Activated CD8-positive, alpha-beta T cell treated with anti-CD3 and anti-CD28 coated beads, Interleukin-2, amount 10 ng/mL, durations not matched to agents 7 days and 5 days (primary cell): ENCODE measurements at regions of chr11 and their contacts with region 1.

Region 1: DNA sequence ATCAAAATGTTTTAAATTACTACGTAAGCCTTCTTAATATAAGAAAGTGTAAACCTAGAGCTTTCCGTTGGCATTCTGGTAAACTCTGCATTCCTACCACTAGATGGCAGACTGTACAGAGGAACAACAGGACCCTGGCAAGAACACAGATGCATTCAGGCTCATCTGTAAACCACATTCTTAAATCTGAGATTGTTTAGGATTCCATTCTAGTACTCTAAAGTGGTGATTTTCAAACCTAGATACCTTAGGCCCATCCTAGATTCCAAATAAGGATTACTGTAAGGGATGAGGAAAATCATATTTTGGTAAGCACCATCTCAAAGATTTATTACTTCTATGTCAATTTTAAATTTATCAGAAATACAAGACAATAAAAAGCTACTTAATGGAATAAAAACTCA is 26.9 kb downstream of the PICALM start:
- DNase-seq: peak; percentile 68
- ATAC-seq: peak; percentile 84
- H3K4me3 Mint-ChIP-seq: no peak overlapping the region
- H3K27ac Mint-ChIP-seq: no peak overlapping the region
- H3K4me1 Mint-ChIP-seq: peaks cover 52% of the 10 kb centered on the region
- H3K27me3 Mint-ChIP-seq: no peaks in the 10 kb centered on the region

Region 2: DNA sequence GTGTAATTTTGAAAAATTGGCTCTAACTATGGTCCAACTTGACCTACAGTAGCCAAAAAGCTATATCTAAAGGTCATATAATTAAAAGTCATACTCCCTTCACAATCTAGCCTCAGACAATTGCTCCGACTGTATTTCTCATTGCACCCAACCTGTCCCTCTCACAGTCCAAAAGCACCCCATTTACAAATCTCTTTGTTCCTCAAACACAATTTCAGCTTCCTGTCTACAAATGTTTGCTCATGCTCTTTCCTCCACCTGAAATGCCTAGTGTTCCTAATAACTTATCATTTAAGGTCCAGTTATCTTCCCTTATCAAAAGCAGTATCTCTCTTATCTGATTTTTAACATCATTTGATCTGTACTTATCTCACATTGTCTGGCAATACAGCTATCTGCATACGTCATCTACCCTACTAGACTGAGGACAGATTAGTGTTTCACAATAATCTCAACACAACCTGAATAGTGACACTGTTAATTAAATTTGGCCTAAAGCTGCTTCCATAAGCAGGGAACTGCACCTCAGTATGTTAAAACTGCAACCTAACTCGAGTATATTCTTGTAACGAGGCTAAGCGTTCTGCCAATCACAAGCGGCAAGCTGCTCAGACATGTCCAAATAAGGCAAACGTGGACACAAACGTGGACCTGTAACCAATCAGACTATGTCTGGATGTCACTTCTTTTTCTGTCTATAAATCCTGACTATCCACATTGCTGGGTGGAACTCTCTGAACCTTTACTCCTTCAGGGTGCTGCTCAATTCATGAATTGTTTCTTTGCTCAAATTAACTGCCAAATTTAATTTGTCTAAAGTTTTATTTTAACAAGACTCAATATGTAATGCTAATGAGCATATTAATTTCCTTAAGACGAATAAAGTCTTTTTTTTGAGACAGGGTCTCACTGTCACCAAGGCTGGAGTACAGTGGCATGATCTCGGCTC is 11.0 kb after region 1 on chr11:
- CTCF ChIA-PET with region 1: interaction called, 33 read pairs
- POLR2A ChIA-PET with region 1: no interaction called
- DNase-seq: no peak
- ATAC-seq: no peak
- H3K4me3 Mint-ChIP-seq: no peak overlapping the region
- H3K27ac Mint-ChIP-seq: no peak overlapping the region
- H3K4me1 Mint-ChIP-seq: peaks cover 62% of the 10 kb centered on the region
- H3K27me3 Mint-ChIP-seq: no peaks in the 10 kb centered on the region

Region 3: GRCh38 chr11:86124834-86125233 is 82.9 kb after region 1 on chr11:
- CTCF ChIA-PET with region 1: no interaction called
- POLR2A ChIA-PET with region 1: no interaction called
- DNase-seq: no peak
- ATAC-seq: no peak
- H3K4me3 Mint-ChIP-seq: no peak overlapping the region
- H3K27ac Mint-ChIP-seq: no peak overlapping the region
- H3K4me1 Mint-ChIP-seq: peaks cover 12% of the 10 kb centered on the region
- H3K27me3 Mint-ChIP-seq: peaks cover 4% of the 10 kb centered on the region

Region 4: DNA sequence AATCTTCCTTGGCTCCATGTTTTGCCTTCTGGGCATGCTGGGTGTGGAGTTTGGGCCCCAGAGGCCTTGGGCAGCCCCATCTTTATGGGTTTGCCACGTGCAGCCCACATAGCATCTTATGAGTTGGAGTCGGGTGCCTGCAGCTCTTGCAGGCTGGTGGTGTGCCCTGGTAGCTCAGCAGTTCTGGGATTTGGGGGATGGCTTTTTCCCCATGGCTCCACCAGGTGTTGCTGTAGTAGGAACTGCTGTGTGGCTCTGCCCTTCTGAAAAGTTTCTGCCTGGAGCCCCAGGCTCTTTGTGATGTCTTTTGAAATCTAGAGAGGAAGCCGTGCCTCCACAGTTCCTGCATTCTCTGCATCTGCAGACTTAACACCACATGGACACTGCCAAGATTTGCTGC is 219.4 kb after region 1 on chr11:
- CTCF ChIA-PET with region 1: interaction called, 10 read pairs
- POLR2A ChIA-PET with region 1: no interaction called
- DNase-seq: no peak
- ATAC-seq: no peak
- H3K4me3 Mint-ChIP-seq: no peak overlapping the region
- H3K27ac Mint-ChIP-seq: no peak overlapping the region
- H3K4me1 Mint-ChIP-seq: no peaks in the 10 kb centered on the region
- H3K27me3 Mint-ChIP-seq: no peaks in the 10 kb centered on the region

Region 5: DNA sequence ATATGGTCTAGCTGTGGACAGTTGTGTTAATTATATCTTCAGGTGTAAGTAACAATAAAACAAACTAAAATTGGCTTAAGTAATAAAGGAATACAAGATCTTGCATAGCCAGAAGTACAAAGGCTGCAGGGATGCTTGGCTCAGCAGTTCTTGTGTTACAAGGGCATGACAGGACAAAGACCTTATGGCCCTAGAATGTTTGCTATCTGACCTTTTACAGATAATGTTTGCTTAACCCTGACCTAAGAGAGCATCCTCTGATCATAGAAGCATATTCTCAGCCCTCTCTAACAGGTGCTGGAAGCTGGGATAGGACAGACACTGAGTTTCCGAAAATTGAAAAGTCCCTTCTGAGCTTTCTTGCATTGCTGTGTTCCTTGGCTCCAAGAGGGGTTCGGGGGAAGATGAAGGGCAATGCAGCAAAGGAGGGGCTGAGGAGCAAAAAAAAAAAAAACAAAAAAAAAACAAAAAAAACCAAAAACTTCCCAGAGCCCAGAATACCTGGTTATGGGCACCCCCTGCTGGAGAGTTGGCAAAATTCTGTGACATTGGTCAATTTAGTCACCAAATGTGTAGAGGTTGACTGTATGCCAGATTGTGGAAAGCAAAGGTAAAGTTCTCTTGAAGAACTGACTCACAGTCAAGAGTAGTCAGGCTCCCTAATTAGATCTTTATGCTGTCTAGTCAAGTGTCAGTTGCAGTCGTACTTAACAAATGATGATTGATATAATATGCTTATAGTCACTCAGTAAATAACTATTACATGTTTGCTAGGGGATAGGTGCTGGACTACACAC is 249.7 kb after region 1 on chr11:
- CTCF ChIA-PET with region 1: interaction called, 12 read pairs
- POLR2A ChIA-PET with region 1: interaction called, 3 read pairs
- DNase-seq: peak; percentile 71
- ATAC-seq: peak; percentile 48
- H3K4me3 Mint-ChIP-seq: no peak overlapping the region
- H3K27ac Mint-ChIP-seq: no peak overlapping the region
- H3K4me1 Mint-ChIP-seq: peaks cover 44% of the 10 kb centered on the region
- H3K27me3 Mint-ChIP-seq: peaks cover 4% of the 10 kb centered on the region